ENCODE measurements at regions of chr2 and their contacts with region 1.

Region 1: GRCh38 chr2:207746131-207746530 is 23.6 kb downstream of the FZD5 start:
- DNase-seq: no peak
- H3K4me3 Mint-ChIP-seq: no peak overlapping the region
- H3K27ac Mint-ChIP-seq: no peak overlapping the region
- H3K4me1 Mint-ChIP-seq: no peaks in the 10 kb centered on the region
- H3K27me3 Mint-ChIP-seq: no peaks in the 10 kb centered on the region

Region 2: GRCh38 chr2:207334624-207335371 is 411.3 kb before region 1 on chr2:
- intact Hi-C with region 1: no loop called
- DNase-seq: no peak
- H3K4me3 Mint-ChIP-seq: peak overlapping the region; percentile 26
- H3K27ac Mint-ChIP-seq: peak overlapping the region; percentile 93
- H3K4me1 Mint-ChIP-seq: peaks cover 74% of the 10 kb centered on the region
- H3K27me3 Mint-ChIP-seq: no peaks in the 10 kb centered on the region

Region 3: GRCh38 chr2:207769597-207770486 is 23.7 kb after region 1 on chr2 and contains the start of gene FZD5:
- intact Hi-C with region 1: no loop called
- DNase-seq: peak; percentile 76
- H3K4me3 Mint-ChIP-seq: peak within 1 kb of the TSS; percentile 83
- H3K27ac Mint-ChIP-seq: peak within 1 kb of the TSS; percentile 46
- H3K4me1 Mint-ChIP-seq: peaks cover 23% of the 10 kb centered on the region
- H3K27me3 Mint-ChIP-seq: peaks cover 58% of the 10 kb centered on the region
- total RNA-seq, gene FZD5: 1.7 TPM in 2 replicates

Region 4: GRCh38 chr2:207847807-207848544 is 101.8 kb after region 1 on chr2:
- intact Hi-C with region 1: no loop called
- DNase-seq: no peak
- H3K4me3 Mint-ChIP-seq: no peak overlapping the region
- H3K27ac Mint-ChIP-seq: no peak overlapping the region
- H3K4me1 Mint-ChIP-seq: peaks cover 7% of the 10 kb centered on the region
- H3K27me3 Mint-ChIP-seq: no peaks in the 10 kb centered on the region

Region 5: DNA sequence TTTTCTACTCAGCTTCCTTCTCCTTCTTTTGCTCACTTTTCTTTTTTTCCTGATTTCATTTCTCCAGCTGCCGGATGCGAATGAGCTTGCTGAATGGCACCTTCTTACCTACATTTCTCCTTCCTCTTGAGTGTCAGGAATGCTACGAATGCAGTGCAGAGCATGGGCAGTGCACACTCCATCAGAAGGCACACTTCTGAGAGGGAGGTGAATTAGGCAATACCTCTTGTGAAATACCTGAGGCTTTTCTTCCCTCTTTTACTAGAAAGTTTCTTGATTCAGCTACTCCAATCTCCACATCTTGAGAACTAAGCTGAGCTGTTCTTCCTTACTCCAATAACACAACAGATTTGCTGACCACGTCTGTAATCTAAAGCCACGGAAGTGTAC is 228.1 kb after region 1 on chr2:
- intact Hi-C with region 1: loop called (anchors 1 kb)
- DNase-seq: no peak
- H3K4me3 Mint-ChIP-seq: no peak overlapping the region
- H3K27ac Mint-ChIP-seq: no peak overlapping the region
- H3K4me1 Mint-ChIP-seq: peaks cover 16% of the 10 kb centered on the region
- H3K27me3 Mint-ChIP-seq: no peaks in the 10 kb centered on the region

Region 6: GRCh38 chr2:208040199-208041171 is 294.4 kb after region 1 on chr2:
- intact Hi-C with region 1: loop called (anchors 1 kb)
- DNase-seq: peak; percentile 51
- H3K4me3 Mint-ChIP-seq: no peak overlapping the region
- H3K27ac Mint-ChIP-seq: no peak overlapping the region
- H3K4me1 Mint-ChIP-seq: peaks cover 3% of the 10 kb centered on the region
- H3K27me3 Mint-ChIP-seq: peaks cover 21% of the 10 kb centered on the region

Region 7: DNA sequence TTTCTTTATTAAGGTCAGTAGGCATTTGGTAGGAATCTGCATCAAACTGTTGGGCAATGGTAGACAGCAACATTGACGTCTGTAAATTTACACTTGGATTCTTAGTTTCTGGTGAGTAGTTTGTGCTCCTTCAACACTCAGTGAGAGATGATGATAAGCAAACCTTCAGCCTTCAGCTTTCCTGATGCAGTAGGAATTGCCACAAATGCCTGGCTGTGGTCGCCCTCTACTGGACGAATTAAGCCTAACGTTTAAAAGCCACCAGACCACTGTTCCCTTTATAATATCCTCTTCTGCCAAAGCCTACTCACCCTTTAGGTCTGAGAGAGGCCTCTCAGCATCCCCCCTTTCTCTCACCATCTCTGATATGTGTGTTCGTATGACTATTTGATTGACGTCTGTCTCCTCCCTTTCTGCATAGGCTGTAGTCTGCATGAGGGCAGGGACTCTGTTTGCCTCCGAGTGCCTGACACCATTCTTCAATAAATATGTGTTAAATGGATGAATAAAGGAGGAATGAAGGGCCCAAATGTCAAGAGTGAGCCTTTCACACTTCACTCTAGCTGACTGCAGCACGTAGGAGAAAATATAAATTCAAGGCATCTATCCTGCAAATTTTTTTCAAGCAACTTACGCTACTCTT is 326.2 kb after region 1 on chr2:
- intact Hi-C with region 1: loop called (anchors 1 kb)
- DNase-seq: peak; percentile 30
- H3K4me3 Mint-ChIP-seq: no peak overlapping the region
- H3K27ac Mint-ChIP-seq: no peak overlapping the region
- H3K4me1 Mint-ChIP-seq: no peaks in the 10 kb centered on the region
- H3K27me3 Mint-ChIP-seq: peaks cover 7% of the 10 kb centered on the region